ENCODE measurements at regions of chr5 and their contacts with region 1.

Region 1: DNA sequence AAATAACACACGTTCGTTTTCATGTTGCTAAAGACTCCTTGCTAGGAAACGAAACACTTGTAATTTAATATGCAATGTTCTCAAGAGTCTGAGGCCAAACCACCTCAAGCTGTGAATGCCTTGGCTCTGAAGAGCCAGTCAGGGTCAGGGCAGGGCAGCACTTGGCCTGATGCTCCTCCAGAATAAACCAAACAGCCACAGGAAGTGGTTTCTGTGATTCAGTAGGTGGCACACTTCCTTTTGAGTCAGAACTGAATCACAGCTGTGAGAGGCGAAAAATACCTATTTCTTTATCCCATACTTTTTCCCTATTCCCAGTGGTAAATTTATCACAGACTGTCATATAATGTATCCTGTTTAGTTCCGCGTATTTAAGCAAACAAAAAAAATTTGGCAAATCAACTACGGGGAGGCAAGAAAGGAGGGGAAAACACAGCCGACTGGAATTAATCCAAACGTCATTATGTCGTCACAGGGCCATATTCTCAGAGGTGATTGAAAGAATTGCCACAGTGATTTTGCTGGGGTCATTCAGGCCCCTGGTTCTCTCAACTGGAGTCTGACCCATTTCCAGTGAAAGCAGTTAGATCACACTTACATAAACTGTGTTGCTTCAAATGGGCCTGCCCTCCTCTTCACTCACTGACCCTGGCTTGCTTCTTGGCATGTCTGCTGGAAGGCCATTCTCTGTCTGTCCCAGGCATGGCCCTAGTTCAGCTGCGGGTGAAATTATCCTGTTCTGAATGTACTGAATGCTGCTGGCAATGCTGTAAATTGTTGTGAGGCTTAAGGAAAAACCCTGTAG is 71.2 kb downstream of the ARRDC3 start:
- DNase-seq: peak; percentile 95

Region 2: GRCh38 chr5:90434116-90434714 is 877.7 kb before region 1 on chr5:
- in situ Hi-C with region 1: no loop called
- DNase-seq: no peak

Region 3: GRCh38 chr5:91272858-91273257 is 39.0 kb before region 1 on chr5:
- in situ Hi-C with region 1: no loop called
- DNase-seq: no peak

Region 4: DNA sequence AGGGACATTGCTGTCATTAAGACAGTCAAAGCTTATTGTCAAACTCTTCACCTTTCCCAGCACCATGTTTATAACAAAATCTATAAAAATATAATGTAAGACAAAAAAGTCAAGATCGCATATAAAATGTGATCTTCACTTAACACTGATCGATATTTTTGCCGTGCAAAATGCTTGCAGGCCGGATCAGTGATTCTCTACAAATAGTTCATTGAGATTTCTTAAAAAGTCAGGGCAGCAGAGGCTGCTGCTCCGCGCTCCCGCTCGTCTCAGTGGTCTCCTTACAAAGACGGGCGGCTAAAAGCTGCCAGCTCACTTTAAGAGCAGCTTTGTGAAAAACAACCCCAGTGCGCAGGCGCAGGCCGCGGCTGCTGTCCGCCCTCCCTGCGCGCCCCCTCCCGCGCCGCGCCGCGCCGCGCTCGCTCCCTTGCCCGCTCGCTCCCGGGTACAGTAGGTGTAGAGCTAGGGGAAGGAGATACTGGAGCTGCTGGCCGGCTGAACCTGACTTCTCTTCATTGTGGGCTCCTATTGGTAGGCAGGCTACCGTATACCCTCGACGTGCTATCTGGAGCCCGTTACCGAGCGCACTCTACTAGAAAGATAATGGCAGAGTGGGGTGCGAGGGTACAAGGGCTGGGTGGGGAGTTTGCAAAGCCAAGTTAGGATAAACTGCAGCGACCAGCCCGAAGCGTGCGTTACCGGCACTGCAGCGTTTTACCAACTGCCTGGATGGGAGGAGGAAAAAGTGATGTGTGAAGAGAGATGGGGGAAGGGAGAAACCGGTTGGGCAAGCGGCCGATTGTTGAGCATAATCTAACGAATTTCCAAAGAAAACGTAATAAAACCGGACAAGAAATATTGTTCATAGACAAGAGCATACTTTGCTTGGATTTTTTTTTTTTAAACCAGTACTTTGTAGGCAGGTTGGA is 71.4 kb after region 1 on chr5 and contains the start of gene ARRDC3:
- in situ Hi-C with region 1: loop called (anchors 5 kb)
- DNase-seq: peak; percentile 98
- total RNA-seq, gene ARRDC3: 40.5 and 45.9 TPM in 2 replicates

Region 5: DNA sequence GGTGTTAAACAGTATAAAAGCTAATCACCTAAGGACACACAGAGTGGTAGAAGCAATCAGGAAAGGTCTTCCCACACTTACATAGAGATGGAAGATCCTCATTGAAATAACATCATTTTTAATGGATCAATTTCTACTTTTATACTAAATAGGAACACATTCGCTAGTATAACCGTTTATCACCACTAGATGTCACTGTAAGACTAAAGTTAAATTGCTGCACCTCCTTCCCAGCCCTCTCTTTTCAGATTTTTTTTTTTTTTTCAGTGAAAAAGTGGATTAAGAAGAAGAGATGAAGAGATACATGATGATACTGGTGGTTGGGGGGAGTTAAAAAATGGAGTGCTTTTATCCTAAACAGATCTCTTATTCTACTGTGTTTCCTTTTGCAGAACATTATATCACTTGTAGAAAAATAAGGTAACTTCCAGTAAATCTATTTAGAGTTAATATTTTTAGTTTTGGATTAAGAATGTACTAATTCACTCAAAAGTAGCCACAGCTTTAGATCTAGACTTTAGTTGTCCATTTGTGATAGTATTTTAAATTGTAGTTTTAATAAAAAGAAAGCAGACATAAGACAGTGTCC is 188.1 kb after region 1 on chr5:
- in situ Hi-C with region 1: no loop called
- DNase-seq: peak; percentile 24